ENCODE measurements at regions of chr12 and their contacts with region 1.

Region 1: DNA sequence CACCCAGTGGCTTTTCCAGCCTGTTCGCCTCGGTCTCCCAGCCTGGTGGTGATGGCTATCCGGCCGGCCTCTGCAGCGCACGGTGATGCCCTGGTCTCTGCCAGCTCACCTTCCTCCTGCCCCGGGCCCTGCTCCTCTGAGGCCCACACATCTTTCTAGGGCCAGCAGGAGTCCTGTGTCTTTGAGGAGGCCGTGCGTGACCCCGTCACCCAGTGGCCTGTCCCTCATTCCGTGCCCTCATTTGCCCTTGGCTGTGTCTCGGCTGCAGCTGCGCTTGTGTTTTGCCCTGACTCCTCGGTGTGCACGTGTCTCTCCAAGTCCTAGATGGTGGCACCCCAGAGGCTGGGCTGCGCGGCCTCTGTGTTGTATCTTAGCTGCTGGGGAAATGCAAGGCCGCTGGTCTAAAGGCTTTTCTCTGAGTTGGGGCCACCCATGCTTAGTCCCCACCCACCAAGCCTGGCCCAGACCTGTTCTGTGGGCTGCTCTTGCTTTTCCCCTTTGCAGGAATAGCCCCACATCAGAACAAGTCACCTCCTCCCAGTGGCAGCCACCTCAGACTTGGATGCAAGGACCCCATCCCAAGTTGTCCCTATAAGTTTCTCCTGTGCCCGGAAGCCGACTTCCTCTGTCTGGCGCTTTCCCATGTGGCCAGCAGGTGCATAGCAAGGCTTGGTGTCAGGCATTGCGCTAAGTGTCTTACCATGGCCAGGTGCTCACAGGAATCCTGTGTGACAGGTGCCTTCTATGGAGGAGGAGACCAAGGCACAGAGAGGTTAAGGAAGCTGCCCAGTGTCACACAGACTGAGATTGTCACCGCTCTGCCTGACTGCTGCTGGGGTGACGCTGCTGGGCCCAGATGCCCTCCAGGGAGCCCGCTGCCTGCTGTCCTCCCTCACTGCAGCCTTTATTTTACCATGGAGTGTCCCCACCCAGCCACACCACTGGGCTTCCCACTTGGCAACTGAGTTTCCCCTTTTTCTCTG is 64.5 kb downstream of the TSPAN9 start:
- DNase-seq: peak in 1 of 2 experiments; percentile 44
- H3K4me3 ChIP-seq: no peak overlapping the region
- H3K27ac ChIP-seq: no peak overlapping the region
- H3K4me1 ChIP-seq: peaks cover 2 to 27% (median 19%) of the 10 kb centered on the region in 4 experiments
- H3K27me3 ChIP-seq: no peaks in the 10 kb centered on the region
- CTCF ChIP-seq: peak in 1 of 3 experiments; percentile 54; a peak in 2 of 4 replicates
- EP300 ChIP-seq: no peak
- POLR2A ChIP-seq: no peak
- RAD21 ChIP-seq: peak; percentile 19 to 40; a peak in 2 of 4 replicates

Region 2: GRCh38 chr12:2944401-2945047 is 197.1 kb before region 1 on chr12:
- CTCF ChIA-PET with region 1: no interaction called
- POLR2A ChIA-PET with region 1: no interaction called
- DNase-seq: peak; percentile 71 to 94
- H3K4me3 ChIP-seq: no peak overlapping the region
- H3K27ac ChIP-seq: no peak overlapping the region
- H3K4me1 ChIP-seq: no peaks in the 10 kb centered on the region
- H3K27me3 ChIP-seq: no peaks in the 10 kb centered on the region; a peak in 1 of 7 replicates
- CTCF ChIP-seq: peak; percentile 93 to 100 (median 98)
- EP300 ChIP-seq: no peak
- POLR2A ChIP-seq: no peak
- RAD21 ChIP-seq: peak; percentile 97 to 98

Region 3: GRCh38 chr12:3034067-3034750 is 107.4 kb before region 1 on chr12:
- CTCF ChIA-PET with region 1: no interaction called
- POLR2A ChIA-PET with region 1: no interaction called
- DNase-seq: peak; percentile 54 to 92
- H3K4me3 ChIP-seq: no peak overlapping the region
- H3K27ac ChIP-seq: no peak overlapping the region
- H3K4me1 ChIP-seq: no peaks in the 10 kb centered on the region; a peak in 3 of 7 replicates
- H3K27me3 ChIP-seq: no peaks in the 10 kb centered on the region
- CTCF ChIP-seq: peak; percentile 78 to 92 (median 88)
- EP300 ChIP-seq: no peak
- POLR2A ChIP-seq: no peak
- RAD21 ChIP-seq: peak; percentile 77 to 83

Region 4: GRCh38 chr12:3225154-3225795 is 83.6 kb after region 1 on chr12:
- CTCF ChIA-PET with region 1: interaction called, 10 read pairs
- POLR2A ChIA-PET with region 1: interaction called, 3 read pairs
- DNase-seq: no peak
- H3K4me3 ChIP-seq: no peak overlapping the region
- H3K27ac ChIP-seq: no peak overlapping the region
- H3K4me1 ChIP-seq: peaks cover 0 to 18% (median 4%) of the 10 kb centered on the region in 4 experiments; a peak in 3 of 7 replicates
- H3K27me3 ChIP-seq: no peaks in the 10 kb centered on the region
- CTCF ChIP-seq: no peak
- EP300 ChIP-seq: no peak
- POLR2A ChIP-seq: no peak
- RAD21 ChIP-seq: no peak

Measured in H1 (cell line).